ENCODE measurements at regions of chr6 and their contacts with region 1.

Region 1: GRCh38 chr6:157323255-157323965 is at the start of gene TMEM242:
- DNase-seq: peak; percentile 92
- ATAC-seq: peak; percentile 96
- H3K4me3 Mint-ChIP-seq: peak within 1 kb of the TSS; percentile 98
- H3K27ac Mint-ChIP-seq: peak within 1 kb of the TSS; percentile 94
- H3K4me1 Mint-ChIP-seq: peaks cover 36% of the 10 kb centered on the region
- H3K27me3 Mint-ChIP-seq: peaks cover 23% of the 10 kb centered on the region
- total RNA-seq, gene TMEM242: 9.1 to 9.5 TPM

Region 2: DNA sequence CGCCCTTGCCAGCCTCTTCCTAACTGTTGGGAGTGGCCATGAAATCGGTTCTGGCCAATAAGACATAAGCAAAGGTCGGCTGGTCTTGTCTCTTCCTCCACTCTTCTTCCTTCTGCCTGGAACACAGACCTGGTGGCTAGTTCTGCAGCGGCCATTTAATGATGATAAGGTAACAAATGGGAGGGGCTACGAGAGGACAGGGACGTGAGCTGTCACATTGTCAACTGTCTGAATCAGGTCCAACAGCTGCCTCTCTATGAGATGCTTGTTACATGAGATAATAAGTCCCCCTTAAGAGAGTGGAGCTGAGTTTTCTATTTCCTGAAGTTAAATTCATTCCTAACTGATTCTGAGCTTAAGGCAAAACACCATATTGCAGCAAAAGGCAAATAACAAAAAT is 12.4 kb after region 1 on chr6:
- CTCF ChIA-PET with region 1: interaction called, 41 read pairs
- POLR2A ChIA-PET with region 1: interaction called, 3 read pairs
- DNase-seq: no peak
- ATAC-seq: no peak
- H3K4me3 Mint-ChIP-seq: no peak overlapping the region
- H3K27ac Mint-ChIP-seq: no peak overlapping the region
- H3K4me1 Mint-ChIP-seq: no peaks in the 10 kb centered on the region
- H3K27me3 Mint-ChIP-seq: peaks cover 44% of the 10 kb centered on the region

Region 3: DNA sequence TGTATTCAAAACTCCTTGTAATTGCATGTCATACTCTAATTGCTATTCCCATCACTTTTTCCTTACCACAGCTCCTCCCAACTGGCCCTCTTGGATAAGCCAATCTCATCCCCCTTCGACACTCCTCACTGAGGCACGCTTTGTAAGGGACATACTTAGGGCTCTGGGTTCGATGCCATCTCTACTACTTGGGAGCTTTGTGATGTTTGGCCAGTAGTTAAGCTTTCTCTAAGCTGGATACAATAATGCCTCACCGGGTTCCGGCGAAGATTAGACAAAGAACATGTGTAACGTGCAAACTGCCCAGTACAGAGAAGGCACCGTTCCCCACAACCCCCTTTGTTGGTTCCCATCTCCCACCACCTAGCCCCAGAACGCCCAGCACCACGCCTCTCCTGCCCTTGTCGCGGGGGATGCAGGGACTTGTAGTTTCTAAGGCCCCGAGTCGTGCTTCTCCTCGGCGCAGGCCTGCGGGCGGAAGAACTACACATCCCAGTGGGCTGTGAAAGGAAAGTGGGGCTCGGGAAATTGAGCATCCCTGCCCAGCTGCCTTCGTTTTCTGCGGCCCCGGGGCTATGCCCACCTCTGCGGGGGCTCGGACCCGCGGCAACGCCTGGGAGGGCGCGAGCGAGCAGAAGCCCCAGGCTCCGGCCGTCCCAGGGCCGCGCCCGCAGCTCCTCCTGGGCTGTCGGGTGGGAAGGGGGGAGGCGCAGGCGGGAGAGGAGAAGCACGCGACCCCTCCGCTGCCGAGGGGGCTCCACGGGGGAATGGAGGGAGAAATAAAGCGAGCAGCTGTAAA is 56.4 kb after region 1 on chr6:
- CTCF ChIA-PET with region 1: interaction called, 17 read pairs
- POLR2A ChIA-PET with region 1: interaction called, 6 read pairs
- DNase-seq: peak; percentile 93
- ATAC-seq: peak; percentile 77
- H3K4me3 Mint-ChIP-seq: peak overlapping the region; percentile 79
- H3K27ac Mint-ChIP-seq: peak overlapping the region; percentile 78
- H3K4me1 Mint-ChIP-seq: peaks cover 27% of the 10 kb centered on the region
- H3K27me3 Mint-ChIP-seq: peaks cover 3% of the 10 kb centered on the region

Region 4: DNA sequence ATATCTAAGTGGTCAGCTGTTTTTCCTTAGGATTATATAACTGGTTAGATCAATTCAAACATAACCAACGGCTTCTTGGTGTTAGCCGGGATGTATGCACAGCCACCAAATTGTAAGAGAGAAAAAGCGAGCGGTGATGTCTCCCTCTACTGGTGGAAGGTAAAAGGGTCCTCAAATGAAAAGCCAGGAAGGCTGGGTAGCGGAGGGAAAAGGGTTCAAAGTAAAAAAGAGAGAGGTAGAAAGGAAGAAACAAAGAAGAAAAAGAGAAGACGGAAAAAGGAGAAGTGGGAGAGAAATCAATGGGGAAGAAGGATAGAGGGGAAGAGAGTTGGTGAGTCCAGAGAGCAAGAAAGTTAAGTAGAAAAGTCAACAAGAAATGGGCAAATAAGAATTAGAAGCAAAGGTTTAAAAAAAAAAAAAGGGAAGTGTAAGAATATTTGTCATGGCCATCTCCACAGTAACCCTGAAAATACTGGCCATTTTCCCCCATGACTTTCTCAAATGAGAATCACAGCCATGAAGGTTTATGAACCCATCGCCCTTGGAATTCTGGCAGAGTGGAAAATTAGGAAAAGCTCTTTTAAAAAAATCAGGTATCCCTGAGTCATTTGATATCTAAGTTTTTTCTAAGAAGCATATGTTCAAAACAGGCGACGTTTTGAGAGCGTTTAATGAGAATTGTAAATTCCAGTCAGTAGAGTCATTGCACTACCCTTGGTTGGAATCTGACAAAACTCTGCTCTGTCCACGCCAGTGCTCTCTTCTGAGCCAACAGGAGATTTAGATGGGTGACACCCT is 344.0 kb after region 1 on chr6:
- CTCF ChIA-PET with region 1: interaction called, 86 read pairs
- POLR2A ChIA-PET with region 1: interaction called, 5 read pairs
- DNase-seq: peak; percentile 74
- ATAC-seq: peak; percentile 81
- H3K4me3 Mint-ChIP-seq: no peak overlapping the region
- H3K27ac Mint-ChIP-seq: no peak overlapping the region
- H3K4me1 Mint-ChIP-seq: peaks cover 22% of the 10 kb centered on the region
- H3K27me3 Mint-ChIP-seq: peaks cover 6% of the 10 kb centered on the region

Measured in activated CD8-positive, alpha-beta T cell treated with anti-CD3 and anti-CD28 coated beads, Interleukin-2, amount 10 ng/mL, durations not matched to agents 7 days and 5 days (primary cell).